B cell (primary cell): ENCODE measurements at regions of chr3 and their contacts with region 1.

Region 1: DNA sequence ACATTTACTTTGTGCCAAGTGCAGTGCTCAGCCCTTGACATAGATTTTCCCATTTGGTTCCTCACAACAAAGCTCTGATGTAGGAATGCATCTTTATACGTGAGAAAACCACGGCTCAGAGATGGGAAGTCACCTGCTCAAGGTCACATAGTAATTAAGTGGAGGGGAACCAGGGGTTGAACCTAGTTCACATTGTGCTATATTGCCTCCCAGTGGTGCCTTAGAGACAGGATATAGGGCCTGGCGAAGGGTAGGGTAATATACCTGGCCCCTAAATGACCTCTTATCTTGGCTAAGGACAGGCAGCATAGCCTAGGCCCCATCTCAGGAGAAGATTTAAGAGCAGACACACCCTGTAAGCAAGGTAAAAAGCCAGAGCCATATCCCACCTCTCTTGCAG is 71.5 kb downstream of the FOXP1 start:
- DNase-seq: peak; percentile 76
- ATAC-seq: peak; percentile 95
- H3K4me3 ChIP-seq: peak overlapping the region in 1 of 5 experiments; percentile 10
- H3K4me3 Mint-ChIP-seq: peak overlapping the region; percentile 66
- H3K27ac ChIP-seq: peak overlapping the region; percentile 17 to 74
- H3K27ac Mint-ChIP-seq: no peak overlapping the region
- H3K4me1 ChIP-seq: peaks cover 21 to 28% of the 10 kb centered on the region in 2 donors
- H3K4me1 Mint-ChIP-seq: peaks cover 29% of the 10 kb centered on the region
- H3K27me3 ChIP-seq: no peaks in the 10 kb centered on the region
- H3K27me3 Mint-ChIP-seq: no peaks in the 10 kb centered on the region
- CTCF ChIP-seq: peak; percentile 65

Region 2: DNA sequence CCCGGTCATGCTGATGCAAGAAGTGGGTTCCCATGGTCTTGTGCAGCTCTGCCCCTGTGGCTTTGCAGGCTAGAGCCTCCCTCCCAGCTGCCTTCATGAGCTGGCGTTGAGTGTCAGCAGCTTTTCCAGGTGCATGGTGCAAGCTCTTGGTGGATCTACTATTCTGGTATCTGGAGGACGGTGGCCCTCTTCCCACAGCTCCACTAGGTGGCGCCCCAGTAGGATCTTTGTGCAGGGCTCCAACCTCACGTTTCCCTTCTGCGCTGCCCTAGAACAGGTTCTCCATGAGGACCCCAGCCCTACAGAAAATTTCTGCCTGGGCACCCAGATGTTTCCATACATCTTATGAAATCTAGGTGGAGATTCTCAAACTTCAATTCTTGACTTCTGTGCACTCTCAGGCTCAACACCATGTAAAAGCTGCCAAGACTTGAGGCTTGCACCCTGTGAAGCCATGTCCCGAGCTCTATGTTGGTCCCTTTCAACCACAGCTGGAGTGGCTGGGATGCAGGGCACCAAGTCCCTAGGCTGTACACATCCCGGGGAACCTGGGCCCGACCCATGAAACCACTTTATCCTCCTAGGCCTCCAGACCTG is 961.2 kb before region 1 on chr3:
- CTCF ChIA-PET with region 1: interaction called, 4 read pairs
- POLR2A ChIA-PET with region 1: no interaction called
- intact Hi-C with region 1: loop called (anchors 2 kb)
- DNase-seq: peak; percentile 72
- ATAC-seq: peak; percentile 45
- H3K4me3 ChIP-seq: no peak overlapping the region
- H3K4me3 Mint-ChIP-seq: no peak overlapping the region
- H3K27ac ChIP-seq: no peak overlapping the region
- H3K27ac Mint-ChIP-seq: no peak overlapping the region
- H3K4me1 ChIP-seq: no peaks in the 10 kb centered on the region
- H3K4me1 Mint-ChIP-seq: no peaks in the 10 kb centered on the region
- H3K27me3 ChIP-seq: no peaks in the 10 kb centered on the region
- H3K27me3 Mint-ChIP-seq: no peaks in the 10 kb centered on the region
- CTCF ChIP-seq: peak; percentile 76

Region 3: GRCh38 chr3:71130471-71131374 is 381.3 kb before region 1 on chr3:
- CTCF ChIA-PET with region 1: interaction called, 4 read pairs
- POLR2A ChIA-PET with region 1: no interaction called
- intact Hi-C with region 1: loop called (anchors 1 kb)
- DNase-seq: peak; percentile 81
- ATAC-seq: peak; percentile 76
- H3K4me3 ChIP-seq: peak overlapping the region; percentile 53 to 91 (median 71)
- H3K4me3 Mint-ChIP-seq: peak overlapping the region; percentile 93
- H3K27ac ChIP-seq: peak overlapping the region; percentile 72 to 91
- H3K27ac Mint-ChIP-seq: peak overlapping the region; percentile 94
- H3K4me1 ChIP-seq: peaks cover 51 to 64% of the 10 kb centered on the region in 2 donors
- H3K4me1 Mint-ChIP-seq: peaks cover 68% of the 10 kb centered on the region
- H3K27me3 ChIP-seq: no peaks in the 10 kb centered on the region
- H3K27me3 Mint-ChIP-seq: no peaks in the 10 kb centered on the region
- CTCF ChIP-seq: no peak

Region 4: GRCh38 chr3:71360764-71361163 is 151.2 kb before region 1 on chr3:
- CTCF ChIA-PET with region 1: interaction called, 7 read pairs
- POLR2A ChIA-PET with region 1: interaction called, 11 read pairs
- intact Hi-C with region 1: loop called (anchors 5 kb)
- DNase-seq: peak; percentile 82
- ATAC-seq: peak; percentile 61
- H3K4me3 ChIP-seq: peak overlapping the region; percentile 32 to 67 (median 48)
- H3K4me3 Mint-ChIP-seq: peak overlapping the region; percentile 89
- H3K27ac ChIP-seq: peak overlapping the region; percentile 78 to 87
- H3K27ac Mint-ChIP-seq: peak overlapping the region; percentile 95
- H3K4me1 ChIP-seq: peaks cover 83% of the 10 kb centered on the region in 2 donors
- H3K4me1 Mint-ChIP-seq: peaks cover 83% of the 10 kb centered on the region
- H3K27me3 ChIP-seq: no peaks in the 10 kb centered on the region
- H3K27me3 Mint-ChIP-seq: no peaks in the 10 kb centered on the region
- CTCF ChIP-seq: no peak

Region 5: DNA sequence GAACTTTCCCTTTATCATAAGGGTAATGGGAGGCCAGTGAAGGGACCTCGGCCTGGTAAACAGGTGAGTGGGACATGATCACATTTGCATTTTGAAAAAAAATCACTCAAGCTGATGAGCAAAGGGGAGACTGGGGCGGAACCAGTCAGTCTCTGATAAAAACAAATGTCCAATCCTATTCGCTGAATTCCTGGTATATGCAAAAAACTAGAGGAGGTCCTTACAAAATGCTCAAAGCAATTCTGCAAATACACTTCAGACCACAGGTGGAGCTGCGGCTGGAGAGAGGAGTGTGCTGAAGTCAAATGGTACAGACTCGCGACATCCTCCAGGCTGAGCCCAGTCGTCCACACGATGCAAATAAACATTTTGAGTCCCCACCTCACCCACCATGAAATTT is 95.1 kb before region 1 on chr3:
- CTCF ChIA-PET with region 1: interaction called, 3 read pairs
- POLR2A ChIA-PET with region 1: interaction called, 8 read pairs
- intact Hi-C with region 1: loop called (anchors 5 kb)
- DNase-seq: peak; percentile 75
- ATAC-seq: peak; percentile 50
- H3K4me3 ChIP-seq: peak overlapping the region in 1 of 5 experiments; percentile 7
- H3K4me3 Mint-ChIP-seq: peak overlapping the region; percentile 71
- H3K27ac ChIP-seq: peak overlapping the region; percentile 71 to 76
- H3K27ac Mint-ChIP-seq: peak overlapping the region; percentile 66
- H3K4me1 ChIP-seq: peaks cover 64 to 68% of the 10 kb centered on the region in 2 donors
- H3K4me1 Mint-ChIP-seq: peaks cover 78% of the 10 kb centered on the region
- H3K27me3 ChIP-seq: no peaks in the 10 kb centered on the region
- H3K27me3 Mint-ChIP-seq: no peaks in the 10 kb centered on the region
- CTCF ChIP-seq: peak; percentile 53